ENCODE measurements at regions of chr5 and their contacts with region 1.

Region 1: DNA sequence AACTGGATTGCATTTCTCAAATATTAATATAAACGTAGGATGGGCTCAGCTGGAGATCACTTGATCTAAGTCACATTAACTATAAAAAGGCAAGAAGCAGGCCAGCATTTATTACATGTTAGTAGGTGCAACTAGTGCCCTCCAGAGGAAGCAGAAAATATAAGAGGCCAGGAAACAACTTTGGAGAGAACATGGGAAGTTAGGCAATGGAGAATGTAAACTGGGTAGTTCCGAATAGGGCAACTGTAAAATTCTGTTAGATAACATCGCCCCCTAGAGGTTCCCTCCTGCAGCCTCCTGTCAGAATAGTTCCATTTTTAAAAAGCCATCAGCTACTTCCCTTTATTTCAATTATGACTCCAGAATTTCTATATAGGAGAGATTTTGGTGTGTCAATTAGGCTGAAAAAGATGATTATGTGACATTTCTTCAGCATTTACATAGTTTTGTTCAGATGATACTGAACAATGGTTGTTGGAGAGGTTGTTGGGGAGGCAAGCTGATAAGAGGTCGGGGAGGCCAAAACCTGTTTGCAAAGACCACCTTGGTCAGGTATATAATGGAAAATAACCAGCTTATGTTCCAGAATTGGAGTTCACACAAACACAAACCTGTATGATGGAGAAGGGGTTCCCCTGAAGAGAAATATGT is 22.4 kb downstream of the CCL28 start:
- DNase-seq: peak; percentile 48
- H3K4me3 Mint-ChIP-seq: no peak overlapping the region
- H3K27ac Mint-ChIP-seq: no peak overlapping the region
- H3K4me1 Mint-ChIP-seq: peaks cover 17% of the 10 kb centered on the region
- H3K27me3 Mint-ChIP-seq: no peaks in the 10 kb centered on the region

Region 2: GRCh38 chr5:43105369-43106289 is 284.2 kb before region 1 on chr5:
- CTCF ChIA-PET with region 1: interaction called, 25 read pairs
- POLR2A ChIA-PET with region 1: interaction called, 3 read pairs
- DNase-seq: peak; percentile 90
- H3K4me3 Mint-ChIP-seq: peak overlapping the region; percentile 78
- H3K27ac Mint-ChIP-seq: peak overlapping the region; percentile 83
- H3K4me1 Mint-ChIP-seq: peaks cover 45% of the 10 kb centered on the region
- H3K27me3 Mint-ChIP-seq: no peaks in the 10 kb centered on the region

Region 3: DNA sequence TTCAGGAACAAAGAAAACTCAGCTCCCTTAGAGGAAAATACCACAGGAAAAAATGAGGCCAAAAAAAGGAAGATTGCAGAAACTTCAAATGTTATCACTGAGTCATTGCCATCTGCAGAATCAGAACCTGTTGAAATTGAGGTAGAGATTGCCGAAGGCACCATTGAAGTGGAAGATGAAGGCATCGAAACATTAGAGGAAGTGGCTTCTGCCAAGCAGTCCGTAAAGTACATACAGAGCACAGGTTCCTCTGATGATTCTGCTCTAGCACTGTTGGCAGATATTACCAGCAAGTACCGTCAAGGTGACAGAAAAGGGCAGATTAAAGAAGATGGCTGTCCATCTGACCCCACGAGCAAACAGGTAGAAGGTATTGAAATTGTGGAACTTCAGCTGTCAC is 228.6 kb before region 1 on chr5:
- CTCF ChIA-PET with region 1: no interaction called
- POLR2A ChIA-PET with region 1: no interaction called
- DNase-seq: no peak
- H3K4me3 Mint-ChIP-seq: no peak overlapping the region
- H3K27ac Mint-ChIP-seq: no peak overlapping the region
- H3K4me1 Mint-ChIP-seq: peaks cover 8% of the 10 kb centered on the region
- H3K27me3 Mint-ChIP-seq: no peaks in the 10 kb centered on the region

Region 4: DNA sequence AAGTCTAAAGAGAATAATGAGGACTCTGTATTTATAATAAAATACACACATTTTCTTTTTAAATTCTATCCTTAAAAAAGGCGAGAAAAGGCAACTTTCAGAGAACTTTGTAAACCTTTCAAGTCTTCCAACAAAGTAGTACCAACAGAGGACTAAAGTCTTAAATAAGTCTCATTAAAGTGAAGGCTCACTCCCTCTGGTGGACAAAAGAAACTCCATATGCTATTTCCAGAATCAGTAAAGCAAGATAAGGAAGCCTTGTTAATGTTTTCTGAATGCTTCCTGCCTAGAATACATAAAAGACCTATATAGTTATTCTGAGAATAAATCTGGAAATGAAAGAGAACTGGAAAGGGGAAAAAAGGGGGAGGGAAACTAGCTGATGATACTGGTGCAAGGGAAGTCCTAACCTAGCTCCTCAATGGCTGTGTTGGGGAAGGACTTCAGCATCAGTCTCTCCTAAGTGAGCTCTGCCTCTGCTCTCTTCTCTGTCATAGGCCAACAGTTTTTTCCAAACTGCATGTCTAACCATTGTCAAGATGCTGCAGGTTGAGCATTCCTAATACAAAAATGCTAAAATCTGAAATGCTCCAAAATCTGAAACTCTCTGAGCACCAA is 83.7 kb before region 1 on chr5:
- CTCF ChIA-PET with region 1: interaction called, 19 read pairs
- POLR2A ChIA-PET with region 1: interaction called, 4 read pairs
- DNase-seq: no peak
- H3K4me3 Mint-ChIP-seq: no peak overlapping the region
- H3K27ac Mint-ChIP-seq: peak overlapping the region; percentile 53
- H3K4me1 Mint-ChIP-seq: peaks cover 80% of the 10 kb centered on the region
- H3K27me3 Mint-ChIP-seq: no peaks in the 10 kb centered on the region

Region 5: GRCh38 chr5:43415946-43416802 is 26.4 kb after region 1 on chr5:
- CTCF ChIA-PET with region 1: no interaction called
- POLR2A ChIA-PET with region 1: no interaction called
- DNase-seq: no peak
- H3K4me3 Mint-ChIP-seq: no peak overlapping the region
- H3K27ac Mint-ChIP-seq: no peak overlapping the region
- H3K4me1 Mint-ChIP-seq: no peaks in the 10 kb centered on the region
- H3K27me3 Mint-ChIP-seq: peaks cover 4% of the 10 kb centered on the region

Measured in activated CD4-positive, alpha-beta memory T cell treated with anti-CD3 and anti-CD28 coated beads, Interleukin-2, amount 10 ng/mL, durations not matched to agents 7 days and 5 days (primary cell).